AG04449 (cell line): ENCODE measurements at regions of chr11 and their contacts with region 1.

Region 1: DNA sequence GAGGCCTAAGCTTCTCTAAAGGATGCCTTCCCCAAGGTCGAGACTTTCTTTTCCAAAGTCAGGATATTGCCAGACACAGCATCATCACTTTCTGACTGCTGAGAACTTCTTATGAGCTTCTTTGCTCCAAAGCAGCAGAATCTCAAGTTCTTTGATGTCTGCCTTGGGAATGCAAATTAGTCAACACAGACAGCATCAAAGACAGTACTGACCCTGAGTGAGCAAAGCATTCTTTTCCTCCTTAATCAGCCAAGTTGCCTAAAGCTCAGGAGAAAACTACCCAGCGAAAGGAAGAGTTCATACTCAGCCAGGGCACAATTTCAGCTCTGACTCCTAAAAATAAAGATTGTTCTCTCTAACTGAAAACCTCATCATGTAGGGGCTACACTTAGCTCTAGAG is 98.0 kb downstream of the SLC36A4 start:
- DNase-seq: peak; percentile 23
- H3K4me3 ChIP-seq: no peak overlapping the region
- CTCF ChIP-seq: no peak

Region 2: GRCh38 chr11:93089474-93090102 is 10.2 kb before region 1 on chr11:
- CTCF ChIA-PET with region 1: interaction called, 15 read pairs
- POLR2A ChIA-PET with region 1: interaction called, 3 read pairs
- DNase-seq: no peak
- H3K4me3 ChIP-seq: no peak overlapping the region
- CTCF ChIP-seq: peak; percentile 58

Region 3: DNA sequence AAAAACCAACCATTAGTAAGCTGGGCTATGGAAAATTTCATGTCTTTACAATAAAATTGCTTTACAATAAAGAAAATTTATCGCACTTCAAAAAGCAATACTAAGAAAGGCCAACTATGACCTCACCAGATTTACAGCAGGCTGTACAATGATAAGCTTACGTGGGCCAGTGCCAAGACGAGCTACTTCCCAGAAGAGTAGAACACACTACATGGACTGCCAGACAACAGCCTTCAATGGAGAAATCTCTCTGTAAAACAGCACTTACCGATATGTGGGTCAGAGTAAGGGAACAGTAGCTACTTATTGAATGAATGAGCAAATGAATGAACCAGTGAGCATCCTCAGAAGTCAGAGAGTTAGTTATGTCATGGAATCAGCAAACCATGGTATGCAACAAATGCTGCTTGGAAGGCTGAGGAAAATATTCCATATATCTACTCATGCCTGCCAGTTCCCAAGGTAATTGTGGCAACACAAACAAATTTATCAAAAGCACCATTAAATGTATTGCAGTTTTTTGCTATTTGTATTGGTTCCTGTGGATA is 23.6 kb after region 1 on chr11:
- CTCF ChIA-PET with region 1: no interaction called
- POLR2A ChIA-PET with region 1: no interaction called
- DNase-seq: no peak
- H3K4me3 ChIP-seq: no peak overlapping the region
- CTCF ChIP-seq: no peak

Region 4: DNA sequence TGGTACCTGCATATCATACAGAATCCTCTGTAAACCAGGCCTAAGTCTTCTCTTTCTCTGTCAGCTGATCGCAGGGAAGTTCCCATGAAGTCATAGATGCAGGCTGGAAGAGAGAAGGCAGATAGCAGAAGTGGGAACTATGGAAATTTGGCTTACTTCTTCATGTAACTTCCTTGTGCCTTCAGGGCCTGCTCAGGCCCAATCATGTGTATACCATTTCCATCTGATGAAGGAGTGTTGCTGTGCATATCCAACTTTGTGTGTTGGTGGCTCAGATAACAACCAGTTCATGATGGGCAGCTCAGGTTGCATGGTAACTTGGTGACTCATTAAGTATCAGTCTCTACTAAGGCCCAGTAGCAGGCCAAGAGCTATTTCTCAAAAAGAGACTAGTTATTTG is 508.6 kb after region 1 on chr11:
- CTCF ChIA-PET with region 1: no interaction called
- POLR2A ChIA-PET with region 1: no interaction called
- DNase-seq: no peak
- H3K4me3 ChIP-seq: no peak overlapping the region
- CTCF ChIP-seq: no peak